ENCODE measurements at regions of chr2 and their contacts with region 1.

Region 1: DNA sequence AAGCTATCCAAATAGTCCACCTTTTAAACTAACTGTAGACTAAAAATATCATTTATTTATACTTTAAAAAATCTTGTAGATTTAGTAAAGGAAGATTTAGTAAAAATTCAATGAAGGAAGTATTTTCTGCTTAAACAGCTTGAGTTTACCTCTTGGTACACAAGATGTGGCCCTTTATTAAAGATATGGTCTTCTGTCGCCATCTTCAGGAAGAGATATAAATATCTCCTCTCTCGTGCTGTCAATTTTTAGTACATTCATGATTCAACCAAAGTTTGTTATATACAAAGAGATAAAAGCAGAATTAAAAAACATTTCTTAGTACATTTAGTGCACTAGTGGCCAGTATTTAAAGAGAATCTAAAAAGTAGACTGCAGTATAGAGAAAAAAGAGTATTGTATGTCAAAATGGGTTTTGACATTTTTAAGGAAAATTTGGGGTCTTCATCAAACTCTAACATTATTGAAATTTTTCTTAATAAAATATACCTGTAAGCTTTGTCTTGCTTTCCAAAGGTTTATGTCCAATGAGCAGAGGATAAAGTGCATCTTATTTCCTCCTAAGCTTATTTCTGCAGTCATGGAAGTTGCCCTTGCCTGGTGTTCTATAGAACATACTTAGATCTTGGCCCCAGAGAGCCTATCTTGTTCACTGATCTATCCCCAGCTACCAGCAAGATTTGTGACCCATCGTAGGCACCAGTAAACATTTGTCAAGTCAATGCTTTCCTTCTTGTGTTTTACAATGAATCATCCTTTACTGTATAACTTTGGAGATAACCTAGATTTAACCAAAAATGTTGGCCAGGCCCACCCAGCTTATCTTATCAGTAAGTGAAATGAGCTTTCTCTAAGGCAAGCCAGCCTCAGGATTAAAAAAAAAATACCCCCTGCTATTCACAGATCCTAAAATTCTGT is 18.5 kb upstream of the EML6 start:
- DNase-seq: no peak
- H3K4me3 ChIP-seq: no peak overlapping the region
- H3K27ac ChIP-seq: no peak overlapping the region
- H3K27me3 ChIP-seq: peaks cover 19% of the 10 kb centered on the region
- CTCF ChIP-seq: peak; percentile 63

Region 2: GRCh38 chr2:54161660-54162424 is 543.1 kb before region 1 on chr2:
- CTCF ChIA-PET with region 1: interaction called, 29 read pairs
- POLR2A ChIA-PET with region 1: no interaction called
- DNase-seq: no peak
- H3K4me3 ChIP-seq: no peak overlapping the region
- H3K27ac ChIP-seq: no peak overlapping the region
- H3K27me3 ChIP-seq: no peaks in the 10 kb centered on the region
- CTCF ChIP-seq: no peak; the same call in 1 of the 2 replicates

Region 3: GRCh38 chr2:54206596-54206995 is 498.4 kb before region 1 on chr2:
- CTCF ChIA-PET with region 1: interaction called, 10 read pairs
- POLR2A ChIA-PET with region 1: no interaction called
- DNase-seq: no peak
- H3K4me3 ChIP-seq: no peak overlapping the region
- H3K27ac ChIP-seq: no peak overlapping the region
- H3K27me3 ChIP-seq: no peaks in the 10 kb centered on the region
- CTCF ChIP-seq: peak; percentile 56

Region 4: DNA sequence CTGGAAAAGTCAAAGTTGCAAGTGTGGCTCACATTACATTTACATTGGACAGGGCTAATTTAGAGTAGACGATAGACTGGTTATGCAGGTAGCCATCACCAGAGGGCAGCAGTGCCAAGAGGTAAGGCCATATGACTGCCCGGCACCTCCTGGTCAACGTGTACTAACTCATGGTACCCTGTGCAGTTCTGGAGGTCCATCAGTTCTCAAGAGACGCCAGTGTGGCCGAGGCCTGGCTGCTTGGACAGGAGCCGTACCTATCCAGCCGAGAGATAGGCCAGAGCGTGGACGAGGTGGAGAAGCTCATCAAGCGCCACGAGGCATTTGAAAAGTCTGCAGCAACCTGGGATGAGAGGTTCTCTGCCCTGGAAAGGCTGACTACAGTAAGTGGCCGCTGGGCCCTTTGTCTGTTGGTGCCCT is 47.3 kb before region 1 on chr2:
- CTCF ChIA-PET with region 1: interaction called, 15 read pairs
- POLR2A ChIA-PET with region 1: no interaction called
- DNase-seq: no peak
- H3K4me3 ChIP-seq: no peak overlapping the region
- H3K27ac ChIP-seq: no peak overlapping the region
- H3K27me3 ChIP-seq: no peaks in the 10 kb centered on the region
- CTCF ChIP-seq: peak; percentile 55

Region 5: DNA sequence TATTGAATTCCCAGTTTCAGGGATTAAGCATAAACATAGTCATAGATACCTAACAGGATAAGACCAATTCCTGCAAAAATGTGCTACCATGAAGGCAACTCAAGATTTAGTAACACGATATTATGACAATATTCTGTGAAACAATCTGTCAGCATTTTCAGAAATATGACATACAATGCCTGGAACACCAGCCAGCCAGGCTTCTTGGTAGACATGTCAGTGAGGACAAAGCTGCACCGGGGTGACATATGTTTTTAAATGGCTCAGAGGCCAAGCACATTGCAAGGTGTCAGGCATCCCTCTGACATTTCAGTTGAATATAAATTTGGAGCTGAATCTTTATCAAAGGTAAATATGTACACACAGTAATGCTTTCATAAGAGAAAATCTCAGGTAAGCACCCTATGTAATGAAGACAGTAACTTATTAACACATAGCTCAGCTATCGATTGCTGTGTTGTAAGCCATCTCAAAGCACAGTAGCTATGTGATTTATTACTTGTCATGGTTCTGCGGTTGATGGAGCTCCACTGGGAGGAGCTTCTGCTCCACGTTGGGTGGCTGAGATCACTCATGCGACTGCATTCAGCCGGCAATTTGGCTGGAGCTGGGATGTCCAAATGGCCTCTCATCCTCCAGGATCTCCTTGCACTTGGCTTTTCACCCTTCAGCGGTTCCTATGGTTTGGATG is 13.4 kb before region 1 on chr2:
- CTCF ChIA-PET with region 1: interaction called, 15 read pairs
- POLR2A ChIA-PET with region 1: no interaction called
- DNase-seq: no peak
- H3K4me3 ChIP-seq: no peak overlapping the region
- H3K27ac ChIP-seq: no peak overlapping the region
- H3K27me3 ChIP-seq: no peaks in the 10 kb centered on the region
- CTCF ChIP-seq: no peak

Region 6: GRCh38 chr2:55150834-55151233 is 445.9 kb after region 1 on chr2:
- CTCF ChIA-PET with region 1: no interaction called
- POLR2A ChIA-PET with region 1: no interaction called
- DNase-seq: no peak
- H3K4me3 ChIP-seq: no peak overlapping the region
- H3K27ac ChIP-seq: no peak overlapping the region
- H3K27me3 ChIP-seq: no peaks in the 10 kb centered on the region
- CTCF ChIP-seq: no peak

Measured in AG04450 (cell line).